ENCODE measurements at regions of chr1 and their contacts with region 1.

Region 1: DNA sequence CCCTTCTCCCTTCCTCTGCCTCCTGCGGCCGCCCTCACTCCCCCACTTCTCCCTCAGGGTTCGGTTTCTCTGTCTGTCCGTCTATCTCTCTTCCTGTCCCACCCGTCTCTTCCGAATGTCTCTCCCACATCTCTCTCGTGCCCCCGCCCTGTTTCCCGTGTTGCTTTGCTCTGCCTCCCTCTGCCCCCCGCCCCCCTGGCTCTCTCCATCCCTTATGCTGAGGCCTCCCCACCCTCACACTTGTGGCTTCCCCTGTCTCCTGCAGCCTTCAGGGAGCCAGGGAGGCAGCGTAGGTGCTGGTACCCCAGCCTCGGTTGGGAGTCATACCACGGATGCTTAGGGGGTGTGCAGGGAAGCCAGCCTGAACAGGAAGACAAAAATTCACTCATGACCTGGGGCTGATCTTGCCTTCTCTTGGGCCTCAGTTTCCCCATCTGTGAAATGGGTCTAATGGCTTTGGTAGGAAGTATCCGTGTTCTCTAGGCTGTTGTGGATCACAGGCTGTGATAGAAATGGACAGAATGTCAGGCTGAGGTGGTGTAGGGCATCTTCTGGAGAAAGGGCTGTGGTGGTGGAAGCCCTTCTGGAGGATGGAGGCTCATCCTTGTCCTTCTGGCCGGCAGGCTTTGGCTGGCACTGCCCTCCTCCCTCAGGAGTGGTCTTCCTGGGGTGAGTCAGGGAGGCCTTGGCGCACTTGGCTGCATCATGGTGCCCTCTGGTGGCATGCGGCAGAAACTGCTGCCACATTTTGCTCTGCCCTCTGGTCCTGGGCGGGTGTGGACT is 55.5 kb downstream of the FOXO6 start:
- DNase-seq: peak; percentile 67
- ATAC-seq: peak; percentile 77
- H3K4me3 ChIP-seq: no peak overlapping the region
- H3K27ac ChIP-seq: no peak overlapping the region
- H3K4me1 ChIP-seq: peaks cover 18 to 39% of the 10 kb centered on the region in 2 experiments; a peak in 3 of 4 replicates
- H3K27me3 ChIP-seq: no peaks in the 10 kb centered on the region
- CTCF ChIP-seq: peak; percentile 91 to 94 (median 91)
- POLR2A ChIP-seq: no peak
- RAD21 ChIP-seq: peak; percentile 99

Region 2: DNA sequence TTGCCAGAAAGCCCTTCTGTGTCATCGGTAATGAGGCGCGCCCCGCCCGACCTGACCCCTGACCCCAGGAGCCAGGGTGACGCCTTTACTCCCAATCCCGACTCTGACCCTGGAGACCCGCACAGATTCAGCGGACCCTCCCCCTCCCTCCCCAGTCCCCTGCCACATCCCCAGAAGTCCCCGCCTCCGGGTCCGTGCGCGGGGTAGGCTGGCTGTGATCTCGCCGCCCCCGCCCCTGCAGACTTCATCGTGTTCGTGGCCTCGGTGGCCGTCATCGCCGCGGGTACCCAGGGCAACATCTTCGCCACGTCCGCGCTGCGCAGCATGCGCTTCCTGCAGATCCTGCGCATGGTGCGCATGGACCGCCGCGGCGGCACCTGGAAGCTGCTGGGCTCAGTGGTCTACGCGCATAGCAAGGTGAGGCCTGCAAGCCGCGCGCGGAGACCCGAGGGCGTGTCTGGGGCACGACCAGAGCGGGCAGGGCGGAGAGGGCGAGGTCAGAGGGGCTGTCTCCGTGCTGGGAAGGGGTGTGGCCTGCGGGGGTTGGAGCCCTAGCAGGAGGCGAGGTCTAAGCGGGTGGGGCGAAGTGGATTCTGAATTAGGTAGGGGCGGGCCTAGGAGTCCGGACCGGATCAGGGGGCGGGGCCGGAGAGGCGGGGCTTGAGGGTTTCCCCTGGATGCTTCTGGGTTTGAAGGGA is 598.3 kb before region 1 on chr1:
- CTCF ChIA-PET with region 1: no interaction called
- POLR2A ChIA-PET with region 1: no interaction called
- RAD21 ChIA-PET with region 1: no interaction called
- intact Hi-C with region 1: no loop called
- DNase-seq: no peak
- ATAC-seq: peak; percentile 81
- H3K4me3 ChIP-seq: no peak overlapping the region
- H3K27ac ChIP-seq: no peak overlapping the region
- H3K4me1 ChIP-seq: no peaks in the 10 kb centered on the region
- H3K27me3 ChIP-seq: no peaks in the 10 kb centered on the region
- CTCF ChIP-seq: no peak
- POLR2A ChIP-seq: no peak
- RAD21 ChIP-seq: no peak

Region 3: DNA sequence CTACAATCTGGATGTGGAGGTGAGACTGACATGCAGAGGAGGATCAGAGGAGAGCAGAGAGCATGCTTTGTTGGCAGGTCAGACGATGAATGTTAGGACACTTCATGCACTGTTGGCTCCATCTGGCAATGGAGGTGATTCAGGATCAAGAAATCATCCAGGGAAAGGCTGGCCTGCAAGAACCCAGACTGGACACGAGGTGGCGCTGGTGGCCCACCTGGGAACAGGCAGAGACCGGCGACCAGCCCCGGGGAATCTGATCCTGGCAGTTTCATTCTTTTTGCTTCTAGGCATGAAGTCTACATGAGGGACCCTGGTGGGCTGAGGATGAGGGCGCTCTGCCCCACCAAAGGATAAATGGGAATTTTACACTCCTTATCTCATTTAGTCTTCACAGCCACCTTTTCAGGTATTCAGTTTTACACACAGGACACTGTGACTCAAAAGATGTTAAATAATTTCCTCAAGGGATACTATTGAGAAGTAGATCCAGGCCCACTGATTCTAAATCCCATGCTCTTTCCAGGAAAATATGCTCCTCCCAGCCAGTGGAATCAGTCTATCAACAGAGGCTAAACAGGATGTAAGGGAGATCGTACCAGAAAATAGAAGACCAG is 148.5 kb before region 1 on chr1:
- CTCF ChIA-PET with region 1: interaction called, 3 read pairs
- POLR2A ChIA-PET with region 1: no interaction called
- RAD21 ChIA-PET with region 1: no interaction called
- intact Hi-C with region 1: loop called (anchors 1 kb)
- DNase-seq: peak; percentile 50
- ATAC-seq: peak; percentile 96
- H3K4me3 ChIP-seq: no peak overlapping the region
- H3K27ac ChIP-seq: no peak overlapping the region
- H3K4me1 ChIP-seq: peaks cover 0 to 2% of the 10 kb centered on the region in 2 experiments; a peak in 1 of 4 replicates
- H3K27me3 ChIP-seq: no peaks in the 10 kb centered on the region
- CTCF ChIP-seq: peak; percentile 89 to 96 (median 93)
- POLR2A ChIP-seq: no peak
- RAD21 ChIP-seq: peak; percentile 96

Region 4: DNA sequence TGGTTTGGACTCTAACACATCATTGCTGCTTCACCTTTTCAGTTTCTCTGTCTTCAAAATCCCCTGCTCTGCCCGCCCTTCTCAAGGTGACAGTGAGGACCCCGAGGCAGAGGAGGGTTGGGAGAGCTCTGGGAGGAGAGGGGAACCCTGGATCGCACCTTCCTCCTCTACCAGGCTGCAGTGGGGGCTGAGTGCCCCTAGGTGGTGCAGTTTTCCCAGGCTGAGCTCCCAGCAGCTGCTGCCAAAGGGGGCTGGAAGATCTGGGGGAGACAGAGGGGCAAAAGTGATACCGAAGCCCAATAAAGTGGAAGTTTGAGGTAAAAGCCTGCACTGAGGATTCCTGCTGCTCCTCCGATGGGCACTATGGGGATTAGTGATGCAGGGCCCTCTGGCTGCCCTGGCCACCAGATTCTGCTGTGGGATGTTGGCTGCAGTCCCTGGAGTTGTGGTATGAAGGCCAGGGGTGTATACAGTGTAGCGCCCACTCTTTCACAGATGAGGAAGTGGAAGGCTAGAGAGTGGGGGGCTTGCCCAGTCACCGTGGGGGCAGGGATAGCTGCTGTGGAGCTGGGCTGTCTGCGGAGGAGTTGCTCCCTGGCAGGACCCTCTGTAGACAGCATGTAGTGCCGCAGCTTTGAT is 133.9 kb before region 1 on chr1:
- CTCF ChIA-PET with region 1: interaction called, 27 read pairs
- POLR2A ChIA-PET with region 1: interaction called, 5 read pairs
- RAD21 ChIA-PET with region 1: interaction called, 6 to 9 read pairs
- intact Hi-C with region 1: loop called (anchors 2 kb)
- DNase-seq: peak; percentile 7
- ATAC-seq: peak; percentile 94
- H3K4me3 ChIP-seq: no peak overlapping the region
- H3K27ac ChIP-seq: no peak overlapping the region
- H3K4me1 ChIP-seq: peaks cover 0 to 5% of the 10 kb centered on the region in 2 experiments; a peak in 2 of 4 replicates
- H3K27me3 ChIP-seq: peaks cover 25% of the 10 kb centered on the region; the same call in 1 of the 2 replicates
- CTCF ChIP-seq: peak; percentile 78 to 94 (median 88); a peak in 5 of 6 replicates
- POLR2A ChIP-seq: no peak
- RAD21 ChIP-seq: peak; percentile 85

Region 5: GRCh38 chr1:41313661-41314131 is 103.0 kb before region 1 on chr1:
- CTCF ChIA-PET with region 1: interaction called, 12 read pairs
- POLR2A ChIA-PET with region 1: no interaction called
- RAD21 ChIA-PET with region 1: no interaction called
- intact Hi-C with region 1: no loop called
- DNase-seq: peak; percentile 43
- ATAC-seq: peak; percentile 87
- H3K4me3 ChIP-seq: no peak overlapping the region
- H3K27ac ChIP-seq: no peak overlapping the region
- H3K4me1 ChIP-seq: peaks cover 0 to 8% of the 10 kb centered on the region in 2 experiments; a peak in 2 of 4 replicates
- H3K27me3 ChIP-seq: no peaks in the 10 kb centered on the region
- CTCF ChIP-seq: peak; percentile 69 to 79 (median 74); a peak in 5 of 6 replicates
- POLR2A ChIP-seq: no peak
- RAD21 ChIP-seq: peak; percentile 57

Region 6: DNA sequence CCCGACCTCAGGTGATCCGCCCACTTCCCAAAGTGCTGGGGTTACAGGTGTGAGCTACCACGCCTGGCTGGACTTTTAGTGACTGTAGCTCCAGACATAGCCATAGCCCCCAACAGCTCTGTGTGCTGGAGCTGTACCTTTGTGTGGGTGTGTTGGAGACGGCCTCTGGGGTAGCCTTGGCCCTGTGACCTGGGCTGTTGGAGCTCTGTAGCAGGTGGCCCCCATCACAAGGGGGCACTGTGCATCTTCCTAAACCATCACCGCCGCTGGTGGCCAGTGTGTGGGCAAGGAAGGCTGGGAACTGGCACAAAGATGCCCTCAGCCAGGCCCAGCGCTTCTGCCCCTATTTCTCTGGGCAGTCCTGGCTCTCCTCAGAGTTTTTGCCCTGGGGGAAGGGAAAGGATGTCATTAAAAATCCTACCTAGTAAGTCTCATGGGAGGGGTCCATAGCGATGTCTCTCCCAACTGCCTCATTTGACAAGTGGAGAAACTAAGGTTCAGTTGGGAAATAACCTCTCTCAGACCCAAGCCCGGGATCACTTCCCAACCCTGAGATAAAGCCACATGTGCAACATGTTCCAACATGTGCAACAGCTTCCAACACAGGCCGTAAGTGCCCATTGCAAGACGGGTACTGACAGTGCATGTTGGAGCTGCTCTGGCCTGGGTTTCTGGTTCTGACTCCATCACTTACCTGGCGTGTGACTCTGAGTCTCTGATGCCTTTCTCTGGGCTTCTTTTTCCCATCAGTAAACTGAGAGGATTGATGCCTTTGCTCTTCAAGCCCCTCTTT is 93.7 kb before region 1 on chr1:
- CTCF ChIA-PET with region 1: interaction called, 53 read pairs
- POLR2A ChIA-PET with region 1: interaction called, 6 read pairs
- RAD21 ChIA-PET with region 1: interaction called, 7 to 10 read pairs
- intact Hi-C with region 1: loop called (anchors 1 kb)
- DNase-seq: no peak
- ATAC-seq: peak; percentile 98
- H3K4me3 ChIP-seq: no peak overlapping the region
- H3K27ac ChIP-seq: no peak overlapping the region
- H3K4me1 ChIP-seq: peaks cover 0 to 5% of the 10 kb centered on the region in 2 experiments; a peak in 1 of 4 replicates
- H3K27me3 ChIP-seq: no peaks in the 10 kb centered on the region
- CTCF ChIP-seq: peak; percentile 69 to 92 (median 75)
- POLR2A ChIP-seq: no peak
- RAD21 ChIP-seq: peak; percentile 96

Region 7: GRCh38 chr1:41330588-41331545 is 85.9 kb before region 1 on chr1:
- CTCF ChIA-PET with region 1: interaction called, 12 read pairs
- POLR2A ChIA-PET with region 1: no interaction called
- RAD21 ChIA-PET with region 1: interaction called in 1 of 2 experiments, 3 read pairs
- intact Hi-C with region 1: no loop called
- DNase-seq: peak; percentile 43
- ATAC-seq: peak; percentile 97
- H3K4me3 ChIP-seq: no peak overlapping the region
- H3K27ac ChIP-seq: no peak overlapping the region; the same call in 1 of the 2 replicates
- H3K4me1 ChIP-seq: peaks cover 6 to 20% of the 10 kb centered on the region in 2 experiments; a peak in 3 of 4 replicates
- H3K27me3 ChIP-seq: no peaks in the 10 kb centered on the region
- CTCF ChIP-seq: peak; percentile 29 to 67 (median 59); a peak in 5 of 6 replicates
- POLR2A ChIP-seq: no peak
- RAD21 ChIP-seq: peak; percentile 30

Region 8: DNA sequence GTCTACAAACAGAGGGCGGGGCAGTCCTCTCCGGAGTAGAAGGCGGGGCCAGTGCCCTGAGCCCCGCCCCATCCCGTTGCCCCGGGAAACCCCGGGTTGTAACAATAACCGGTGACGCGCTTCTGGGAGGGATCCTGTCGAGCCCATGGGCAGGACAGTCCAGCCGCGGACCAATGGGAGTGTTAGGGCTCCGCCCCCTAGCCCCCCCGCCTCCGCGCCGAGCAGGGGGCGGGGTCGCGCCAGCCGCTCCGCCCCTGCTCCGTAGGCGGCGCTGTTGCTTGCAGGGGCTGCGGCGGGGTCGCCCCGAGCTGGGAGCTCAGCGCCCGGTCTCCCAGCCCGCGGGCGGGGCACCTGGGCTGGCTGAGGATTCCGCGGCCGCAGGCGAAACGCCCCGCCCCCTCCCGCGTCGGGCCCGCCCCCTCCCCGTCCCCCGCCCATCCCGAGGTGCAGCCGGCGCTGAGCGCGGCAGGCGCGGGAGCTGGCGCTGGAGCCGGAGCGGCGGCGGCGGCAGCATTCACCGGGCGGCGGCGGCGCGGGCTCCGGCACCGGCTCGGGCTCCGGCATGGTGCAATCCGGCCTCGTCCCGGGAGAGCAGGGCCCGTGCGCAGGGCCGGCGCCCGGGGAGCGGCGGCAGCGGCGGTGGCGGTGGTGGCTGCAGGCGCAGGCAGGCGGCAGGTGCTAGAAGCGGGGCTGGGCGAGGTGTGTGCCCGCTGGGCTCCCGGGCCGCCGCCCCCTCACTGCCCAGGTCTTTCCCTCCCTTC is 55.6 kb before region 1 on chr1 and contains the start of gene FOXO6:
- CTCF ChIA-PET with region 1: interaction called, 8 read pairs
- POLR2A ChIA-PET with region 1: interaction called, 6 read pairs
- RAD21 ChIA-PET with region 1: interaction called in 1 of 2 experiments, 3 read pairs
- intact Hi-C with region 1: loop called (anchors 2 kb)
- DNase-seq: peak; percentile 95
- ATAC-seq: peak; percentile 92
- H3K4me3 ChIP-seq: peak within 1 kb of the TSS; percentile 35 to 57
- H3K27ac ChIP-seq: peak within 1 kb of the TSS; percentile 40; the same call in 1 of the 2 replicates
- H3K4me1 ChIP-seq: peaks cover 16 to 47% of the 10 kb centered on the region in 2 experiments
- H3K27me3 ChIP-seq: no peaks in the 10 kb centered on the region
- CTCF ChIP-seq: peak in 1 of 3 experiments; percentile 57; a peak in 3 of 6 replicates
- POLR2A ChIP-seq: no peak
- RAD21 ChIP-seq: no peak
- total RNA-seq, gene FOXO6: 7.0 TPM

Region 9: DNA sequence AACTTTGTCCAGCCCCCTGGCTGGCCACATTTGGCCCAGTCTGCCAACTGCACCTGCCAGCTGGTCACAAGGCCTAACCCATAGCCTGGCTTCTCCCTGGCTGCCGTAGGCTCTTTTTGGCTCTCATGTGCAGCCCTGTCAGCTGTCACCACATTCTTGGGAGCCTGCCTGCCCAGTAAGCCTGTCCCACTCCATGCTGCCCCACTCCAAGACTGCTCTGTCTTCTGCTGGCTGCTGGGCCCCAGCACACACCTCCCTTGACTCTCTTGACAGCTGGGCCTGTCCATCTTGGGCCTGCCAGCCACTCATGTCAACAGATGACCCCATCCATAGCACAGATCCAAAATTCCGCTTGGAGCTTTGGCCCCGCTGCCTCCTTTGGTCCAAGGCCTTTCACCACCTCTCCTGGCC is 142.0 kb after region 1 on chr1:
- CTCF ChIA-PET with region 1: no interaction called
- POLR2A ChIA-PET with region 1: no interaction called
- RAD21 ChIA-PET with region 1: no interaction called
- intact Hi-C with region 1: no loop called
- DNase-seq: no peak
- ATAC-seq: no peak
- H3K4me3 ChIP-seq: no peak overlapping the region
- H3K27ac ChIP-seq: no peak overlapping the region
- H3K4me1 ChIP-seq: no peaks in the 10 kb centered on the region
- H3K27me3 ChIP-seq: no peaks in the 10 kb centered on the region
- CTCF ChIP-seq: no peak
- POLR2A ChIP-seq: no peak
- RAD21 ChIP-seq: no peak

Measured in HCT116 (cell line).